Activated CD4-positive, alpha-beta memory T cell treated with anti-CD3 and anti-CD28 coated beads for 36 hours (primary cell): ENCODE measurements at regions of chr9 and their contacts with region 1.

Region 1: DNA sequence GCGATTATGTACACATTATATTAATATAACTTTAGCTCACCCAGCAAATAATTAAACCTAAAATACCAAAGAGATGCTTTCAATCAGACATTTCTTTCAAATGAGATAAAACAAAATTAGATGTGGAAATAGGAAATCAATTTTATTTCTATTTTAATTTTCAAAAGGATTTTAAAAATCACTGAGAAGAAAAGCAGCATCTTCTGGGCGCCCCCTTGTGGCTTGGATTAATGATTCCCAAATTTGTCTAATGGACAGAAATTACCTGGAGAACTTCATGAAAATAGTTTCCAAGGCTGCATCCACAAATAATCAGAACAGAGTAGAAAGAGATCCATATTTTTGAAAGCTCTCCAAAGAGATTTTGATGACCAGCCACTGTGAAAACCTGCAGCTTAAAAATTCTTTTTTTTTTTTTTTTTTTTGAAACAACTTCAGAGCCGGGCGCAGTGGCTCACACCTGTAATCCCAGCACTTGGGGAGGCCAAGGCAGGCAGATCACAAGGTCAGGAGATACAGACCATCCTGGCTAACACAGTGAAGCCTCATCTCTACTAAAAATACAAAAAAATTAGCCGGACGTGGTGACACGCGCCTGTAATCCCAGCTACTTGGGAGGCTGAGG is 50.9 kb upstream of the CEMIP2 start:
- DNase-seq: peak; percentile 23
- H3K4me3 Mint-ChIP-seq: no peak overlapping the region
- H3K27ac Mint-ChIP-seq: no peak overlapping the region
- H3K4me1 Mint-ChIP-seq: peaks cover 12% of the 10 kb centered on the region
- H3K27me3 Mint-ChIP-seq: no peaks in the 10 kb centered on the region

Region 2: GRCh38 chr9:71285191-71285656 is 534.0 kb before region 1 on chr9:
- CTCF ChIA-PET with region 1: interaction called, 9 read pairs
- POLR2A ChIA-PET with region 1: no interaction called
- intact Hi-C with region 1: loop called (anchors 2 kb)
- DNase-seq: peak; percentile 16
- H3K4me3 Mint-ChIP-seq: no peak overlapping the region
- H3K27ac Mint-ChIP-seq: no peak overlapping the region
- H3K4me1 Mint-ChIP-seq: no peaks in the 10 kb centered on the region
- H3K27me3 Mint-ChIP-seq: no peaks in the 10 kb centered on the region

Region 3: DNA sequence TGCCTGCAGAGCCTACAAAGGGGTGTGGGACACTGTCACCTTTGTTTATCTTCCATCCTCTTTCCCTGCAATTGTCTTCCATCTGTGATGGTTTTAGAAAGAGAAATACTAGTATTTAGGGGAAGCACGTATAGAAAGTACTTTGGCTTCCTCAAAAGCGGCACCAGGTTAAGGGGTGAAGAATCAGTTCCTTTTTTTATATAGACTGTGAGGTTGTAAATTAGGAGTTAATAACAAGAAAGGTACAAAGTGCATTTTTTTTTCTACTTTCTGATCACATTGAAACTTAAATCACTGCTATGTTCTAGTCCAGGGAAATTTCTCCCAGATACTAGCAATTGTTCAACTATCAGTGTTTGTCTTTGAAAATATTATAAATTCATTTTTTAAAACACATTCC is 270.2 kb before region 1 on chr9:
- CTCF ChIA-PET with region 1: no interaction called
- POLR2A ChIA-PET with region 1: no interaction called
- intact Hi-C with region 1: no loop called
- DNase-seq: no peak
- H3K4me3 Mint-ChIP-seq: no peak overlapping the region
- H3K27ac Mint-ChIP-seq: no peak overlapping the region
- H3K4me1 Mint-ChIP-seq: no peaks in the 10 kb centered on the region
- H3K27me3 Mint-ChIP-seq: peaks cover 20% of the 10 kb centered on the region

Region 4: GRCh38 chr9:71748280-71748743 is 70.9 kb before region 1 on chr9:
- CTCF ChIA-PET with region 1: no interaction called
- POLR2A ChIA-PET with region 1: no interaction called
- intact Hi-C with region 1: no loop called
- DNase-seq: no peak
- H3K4me3 Mint-ChIP-seq: no peak overlapping the region
- H3K27ac Mint-ChIP-seq: peak overlapping the region; percentile 51
- H3K4me1 Mint-ChIP-seq: peaks cover 38% of the 10 kb centered on the region
- H3K27me3 Mint-ChIP-seq: no peaks in the 10 kb centered on the region

Region 5: GRCh38 chr9:71778085-71778484 is 41.1 kb before region 1 on chr9:
- CTCF ChIA-PET with region 1: interaction called, 10 read pairs
- POLR2A ChIA-PET with region 1: no interaction called
- intact Hi-C with region 1: loop called (anchors 1 kb)
- DNase-seq: no peak
- H3K4me3 Mint-ChIP-seq: no peak overlapping the region
- H3K27ac Mint-ChIP-seq: no peak overlapping the region
- H3K4me1 Mint-ChIP-seq: peaks cover 30% of the 10 kb centered on the region
- H3K27me3 Mint-ChIP-seq: no peaks in the 10 kb centered on the region

Region 6: DNA sequence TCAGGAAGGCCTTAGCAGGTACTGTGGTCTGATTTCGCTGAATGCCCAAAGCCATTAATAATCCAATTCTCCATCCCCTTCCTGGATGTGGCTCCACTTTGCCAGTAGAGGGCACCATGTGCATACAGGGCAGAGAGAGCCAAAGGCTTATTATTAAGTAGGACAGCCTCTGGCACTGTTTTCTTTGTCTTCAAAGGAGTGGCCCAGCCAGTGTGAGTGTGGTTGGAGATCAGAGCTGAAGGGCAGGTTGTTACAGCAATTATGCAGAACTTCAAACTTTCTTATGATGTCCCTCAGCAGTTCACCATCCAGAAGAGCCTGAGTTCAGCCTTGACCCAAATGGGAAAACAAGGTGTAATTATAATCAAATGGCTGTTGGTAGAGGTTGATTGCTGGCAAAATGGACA is 12.3 kb before region 1 on chr9:
- CTCF ChIA-PET with region 1: interaction called, 38 read pairs
- POLR2A ChIA-PET with region 1: no interaction called
- intact Hi-C with region 1: no loop called
- DNase-seq: peak; percentile 69
- H3K4me3 Mint-ChIP-seq: no peak overlapping the region
- H3K27ac Mint-ChIP-seq: no peak overlapping the region
- H3K4me1 Mint-ChIP-seq: peaks cover 5% of the 10 kb centered on the region
- H3K27me3 Mint-ChIP-seq: no peaks in the 10 kb centered on the region

Region 7: DNA sequence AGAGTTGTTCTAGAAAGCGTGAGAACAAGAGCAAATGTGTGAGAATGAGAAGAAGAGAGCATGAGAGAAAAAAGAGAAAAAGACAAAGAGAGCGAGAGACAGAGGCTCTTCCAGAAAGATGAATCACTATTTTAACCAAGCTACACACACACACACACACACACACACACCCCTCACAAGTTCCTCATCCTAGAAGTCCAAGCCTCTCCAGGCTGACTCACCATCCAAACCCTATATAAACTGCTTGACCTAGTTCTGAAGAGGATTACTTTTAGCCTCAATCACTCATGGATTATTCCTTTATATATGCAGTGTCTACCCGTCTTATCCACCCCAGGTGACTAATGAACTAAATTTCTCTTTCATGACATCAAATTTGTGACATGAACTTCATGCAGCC is 203.6 kb after region 1 on chr9:
- CTCF ChIA-PET with region 1: interaction called, 39 read pairs
- POLR2A ChIA-PET with region 1: no interaction called
- intact Hi-C with region 1: no loop called
- DNase-seq: no peak
- H3K4me3 Mint-ChIP-seq: no peak overlapping the region
- H3K27ac Mint-ChIP-seq: no peak overlapping the region
- H3K4me1 Mint-ChIP-seq: no peaks in the 10 kb centered on the region
- H3K27me3 Mint-ChIP-seq: no peaks in the 10 kb centered on the region